ENCODE measurements at regions of chr20 and their contacts with region 1.

Region 1: DNA sequence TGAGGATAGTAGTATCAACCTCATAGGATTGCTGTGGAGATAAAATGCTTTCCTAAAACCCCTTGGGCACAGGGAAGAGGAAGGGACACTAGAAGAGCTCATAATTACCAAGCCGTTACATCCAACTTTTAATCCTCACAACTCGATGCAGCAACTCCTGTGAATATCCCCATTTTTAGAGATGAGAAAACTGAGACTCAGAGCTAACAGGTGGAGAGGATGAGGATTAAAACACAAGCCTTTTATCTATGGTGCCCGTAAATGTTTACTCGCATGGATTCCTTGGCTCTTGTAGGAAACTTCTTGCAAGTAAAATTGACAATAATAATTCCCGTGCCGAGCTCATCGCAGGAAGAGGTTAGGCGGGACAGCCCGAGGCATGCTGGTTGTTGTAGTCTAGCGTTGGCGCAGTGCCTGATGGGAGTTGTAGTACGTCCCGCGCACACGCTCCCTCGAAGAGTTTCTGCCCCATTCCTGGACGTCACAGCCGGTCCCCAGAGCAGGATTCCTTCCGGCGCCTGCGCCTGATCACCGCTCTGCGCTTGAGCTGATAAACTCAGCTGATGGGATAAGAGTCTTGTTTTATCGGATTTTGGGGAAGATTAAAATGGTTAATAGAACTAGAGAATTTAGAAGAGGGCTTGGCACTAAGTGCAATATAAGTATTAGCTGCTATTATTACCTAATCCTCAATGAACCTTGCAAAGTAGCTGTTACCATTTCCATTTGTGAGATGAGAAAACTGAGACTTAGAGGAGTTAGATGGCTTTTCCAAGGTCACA is 2.8 kb upstream of the UBE2V1 start:
- DNase-seq: peak; percentile 96
- H3K4me3 Mint-ChIP-seq: peak overlapping the region; percentile 89
- H3K27ac Mint-ChIP-seq: peak overlapping the region; percentile 86
- H3K4me1 Mint-ChIP-seq: peaks cover 44% of the 10 kb centered on the region
- H3K27me3 Mint-ChIP-seq: no peaks in the 10 kb centered on the region

Region 2: DNA sequence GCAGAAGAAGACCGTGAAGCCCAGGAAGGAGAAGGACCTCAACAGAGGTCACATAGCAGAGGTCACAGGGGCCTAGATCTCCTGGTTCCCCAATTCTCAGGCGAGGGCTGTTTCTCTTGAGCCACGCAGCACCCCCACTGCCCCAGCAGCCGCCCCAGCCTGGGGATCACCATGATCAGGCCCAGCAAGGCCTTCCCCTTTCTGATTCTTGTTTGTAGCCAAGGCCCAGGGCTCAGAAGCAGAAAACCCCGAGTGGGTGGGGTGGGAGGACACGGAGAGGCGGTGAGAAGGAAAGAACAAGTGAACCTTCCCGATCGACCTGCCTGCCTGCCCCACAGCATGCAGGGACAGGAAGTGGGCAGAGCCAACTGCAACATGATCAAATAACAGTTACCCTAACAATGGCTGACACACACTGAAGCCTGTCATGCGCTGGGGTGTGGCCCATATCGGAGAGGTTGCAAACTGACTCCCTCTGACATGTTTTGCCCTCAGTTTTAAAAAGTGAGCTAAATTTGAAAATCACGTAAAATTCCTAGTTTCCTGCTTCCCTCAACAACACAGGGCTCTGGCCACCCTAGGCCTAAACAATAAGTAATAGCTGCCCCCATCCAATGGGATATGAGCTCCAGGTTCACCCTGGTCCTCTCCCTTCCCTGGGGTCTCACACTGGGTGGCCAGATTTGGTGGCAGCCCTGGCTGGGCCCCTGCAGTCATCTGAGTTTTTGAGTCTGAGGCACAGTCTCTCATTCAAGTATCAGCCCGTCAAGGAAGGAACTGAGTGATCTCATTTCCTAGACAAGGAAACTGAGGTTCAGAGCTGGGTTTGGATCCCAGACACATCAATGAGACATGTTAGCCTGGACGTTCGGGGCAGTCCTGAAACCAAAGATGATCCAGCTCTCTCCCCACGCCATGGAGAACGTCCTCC is 31.2 kb after region 1 on chr20:
- CTCF ChIA-PET with region 1: interaction called, 77 read pairs
- intact Hi-C with region 1: loop called (anchors 1 kb)
- DNase-seq: peak; percentile 91
- H3K4me3 Mint-ChIP-seq: peak overlapping the region; percentile 74
- H3K27ac Mint-ChIP-seq: peak overlapping the region; percentile 98
- H3K4me1 Mint-ChIP-seq: peaks cover 61% of the 10 kb centered on the region
- H3K27me3 Mint-ChIP-seq: no peaks in the 10 kb centered on the region

Region 3: GRCh38 chr20:50165684-50166554 is 50.1 kb after region 1 on chr20:
- CTCF ChIA-PET with region 1: interaction called, 164 read pairs
- intact Hi-C with region 1: loop called (anchors 2 kb)
- DNase-seq: peak; percentile 97
- H3K4me3 Mint-ChIP-seq: peak overlapping the region; percentile 65
- H3K27ac Mint-ChIP-seq: peak overlapping the region; percentile 63
- H3K4me1 Mint-ChIP-seq: peaks cover 11% of the 10 kb centered on the region
- H3K27me3 Mint-ChIP-seq: peaks cover 2% of the 10 kb centered on the region

Region 4: GRCh38 chr20:50338479-50339391 is 223.0 kb after region 1 on chr20:
- CTCF ChIA-PET with region 1: no interaction called
- intact Hi-C with region 1: loop called (anchors 5 kb)
- DNase-seq: peak; percentile 88
- H3K4me3 Mint-ChIP-seq: peak overlapping the region; percentile 53
- H3K27ac Mint-ChIP-seq: peak overlapping the region; percentile 92
- H3K4me1 Mint-ChIP-seq: peaks cover 36% of the 10 kb centered on the region
- H3K27me3 Mint-ChIP-seq: no peaks in the 10 kb centered on the region

Region 5: DNA sequence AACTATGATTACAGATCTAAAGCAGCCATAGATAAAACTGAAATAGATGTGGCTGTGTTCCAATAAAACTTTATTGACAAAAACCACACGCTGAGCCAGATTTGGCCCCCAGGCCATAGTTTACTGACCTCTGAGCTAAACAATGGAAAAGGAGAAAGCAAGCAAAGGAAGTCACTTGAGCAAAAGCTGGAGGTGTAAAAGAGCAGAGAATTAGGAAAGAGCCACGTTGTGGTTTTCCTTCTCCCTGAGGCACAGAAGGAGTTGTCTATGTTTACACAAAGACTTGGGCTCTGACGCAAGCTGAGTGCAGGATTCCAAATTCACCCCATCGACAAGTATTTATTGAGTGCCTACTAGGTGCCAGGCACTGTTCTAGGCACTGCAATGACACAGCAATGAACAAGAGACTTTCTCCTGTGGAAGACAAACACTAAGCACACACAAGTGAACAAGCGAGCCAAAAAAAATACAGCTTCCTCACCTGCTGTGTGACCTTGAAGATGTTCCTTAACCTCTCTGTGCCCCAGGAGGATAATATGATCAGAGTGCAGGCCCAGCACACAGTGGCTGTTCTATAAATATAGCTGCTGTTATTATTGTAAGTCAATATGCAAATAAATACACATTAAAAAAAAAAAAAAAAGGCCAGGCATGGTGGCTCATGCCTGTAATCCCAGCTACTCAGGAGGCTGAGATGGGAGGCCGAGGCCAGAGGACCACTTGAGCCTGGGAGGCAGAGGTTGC is 319.0 kb after region 1 on chr20:
- CTCF ChIA-PET with region 1: no interaction called
- intact Hi-C with region 1: no loop called
- DNase-seq: no peak
- H3K4me3 Mint-ChIP-seq: no peak overlapping the region
- H3K27ac Mint-ChIP-seq: no peak overlapping the region
- H3K4me1 Mint-ChIP-seq: no peaks in the 10 kb centered on the region
- H3K27me3 Mint-ChIP-seq: peaks cover 3% of the 10 kb centered on the region

Region 6: DNA sequence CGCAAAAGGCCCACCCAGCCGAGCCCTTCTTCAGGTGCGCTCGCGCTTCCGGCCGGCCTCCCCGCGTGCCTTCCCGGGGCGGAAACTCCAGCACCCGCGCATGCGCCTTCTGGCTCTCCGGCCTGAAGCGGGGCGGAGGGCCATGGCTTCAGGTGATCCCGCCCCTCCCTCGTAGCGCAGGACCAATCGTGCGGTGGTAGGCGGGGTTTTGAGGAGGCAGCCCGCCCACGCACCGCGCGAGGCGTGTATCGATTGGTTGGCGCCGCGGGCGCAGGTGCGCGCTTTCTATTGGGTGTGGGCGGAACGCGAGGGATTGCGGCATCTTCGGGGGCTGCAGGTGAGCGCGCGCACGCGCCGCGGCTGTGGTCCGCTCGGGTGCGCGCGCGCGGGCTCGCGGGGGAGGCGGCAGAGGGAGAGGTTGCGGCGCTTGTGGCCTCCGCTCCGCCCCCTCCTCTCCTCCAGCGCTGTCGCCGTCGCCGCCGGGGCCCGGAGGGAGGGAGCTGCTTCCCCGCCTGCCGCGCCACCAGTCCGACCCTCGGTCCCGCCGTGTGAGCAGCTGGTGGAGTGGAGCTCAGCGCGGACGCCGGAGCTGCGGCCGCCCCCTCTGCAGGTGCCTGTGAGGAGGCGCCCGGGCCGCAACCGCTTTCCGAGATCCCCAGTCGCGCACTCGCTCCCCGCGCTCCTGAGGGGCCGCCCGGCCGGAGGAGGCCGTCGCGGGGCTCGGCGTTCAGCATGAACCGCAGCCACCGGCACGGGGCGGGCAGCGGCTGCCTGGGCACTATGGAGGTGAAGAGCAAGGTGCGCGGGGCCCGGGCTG is 615.5 kb after region 1 on chr20 and contains the start of gene PARD6B:
- CTCF ChIA-PET with region 1: no interaction called
- intact Hi-C with region 1: loop called (anchors 10 kb)
- DNase-seq: peak; percentile 100
- H3K4me3 Mint-ChIP-seq: peak within 1 kb of the TSS; percentile 86
- H3K27ac Mint-ChIP-seq: peak within 1 kb of the TSS; percentile 70
- H3K4me1 Mint-ChIP-seq: peaks cover 45% of the 10 kb centered on the region
- H3K27me3 Mint-ChIP-seq: no peaks in the 10 kb centered on the region
- total RNA-seq, gene PARD6B: 3.3 to 3.9 TPM